ENCODE measurements at regions of chr20 and their contacts with region 1.

Region 1: DNA sequence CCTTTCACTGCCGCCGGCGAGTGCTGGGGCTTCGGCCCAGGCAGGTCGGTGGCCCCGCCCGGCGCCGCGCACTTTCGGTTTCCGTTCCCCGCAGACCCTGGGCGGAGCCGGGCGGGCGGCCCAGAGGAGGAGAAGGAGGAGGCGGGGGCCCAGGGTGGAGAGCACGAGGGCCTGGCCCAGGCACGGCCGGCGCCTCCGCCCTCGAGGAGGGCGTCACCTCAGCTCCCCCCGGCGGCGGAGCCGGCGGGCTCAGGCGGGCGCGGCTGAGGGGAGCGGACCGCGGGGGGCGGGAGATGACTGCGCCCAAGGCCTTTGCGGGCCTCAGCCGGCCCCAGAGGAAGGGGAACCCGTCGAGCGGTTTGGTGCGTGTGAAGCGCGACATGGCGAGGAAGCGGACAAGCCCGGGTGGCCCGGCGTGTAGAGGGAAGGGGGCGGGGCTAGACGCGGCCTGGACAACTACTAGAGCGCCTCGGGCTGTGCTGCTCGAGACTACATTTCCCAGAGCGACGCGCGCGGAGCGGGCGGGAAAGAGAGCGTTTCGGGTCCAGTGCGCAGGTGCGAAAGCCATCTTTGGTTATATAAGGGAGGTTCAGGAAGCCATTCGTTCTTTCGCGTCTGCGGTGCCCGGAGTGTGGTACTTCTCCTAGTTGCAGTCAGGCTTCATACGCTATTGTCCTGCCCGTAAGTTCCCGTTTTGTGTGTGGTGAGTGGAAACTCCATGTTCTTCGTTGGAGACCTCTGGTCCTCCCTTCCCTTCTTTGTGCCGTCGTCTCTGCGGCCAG is at the start of gene ZNFX1:
- DNase-seq: peak; percentile 99
- H3K4me3 Mint-ChIP-seq: peak within 1 kb of the TSS; percentile 99
- H3K27ac Mint-ChIP-seq: peak within 1 kb of the TSS; percentile 99
- H3K4me1 Mint-ChIP-seq: peaks cover 52% of the 10 kb centered on the region
- H3K27me3 Mint-ChIP-seq: no peaks in the 10 kb centered on the region
- total RNA-seq, gene ZNFX1: 61.2 and 61.5 TPM in 2 replicates

Region 2: DNA sequence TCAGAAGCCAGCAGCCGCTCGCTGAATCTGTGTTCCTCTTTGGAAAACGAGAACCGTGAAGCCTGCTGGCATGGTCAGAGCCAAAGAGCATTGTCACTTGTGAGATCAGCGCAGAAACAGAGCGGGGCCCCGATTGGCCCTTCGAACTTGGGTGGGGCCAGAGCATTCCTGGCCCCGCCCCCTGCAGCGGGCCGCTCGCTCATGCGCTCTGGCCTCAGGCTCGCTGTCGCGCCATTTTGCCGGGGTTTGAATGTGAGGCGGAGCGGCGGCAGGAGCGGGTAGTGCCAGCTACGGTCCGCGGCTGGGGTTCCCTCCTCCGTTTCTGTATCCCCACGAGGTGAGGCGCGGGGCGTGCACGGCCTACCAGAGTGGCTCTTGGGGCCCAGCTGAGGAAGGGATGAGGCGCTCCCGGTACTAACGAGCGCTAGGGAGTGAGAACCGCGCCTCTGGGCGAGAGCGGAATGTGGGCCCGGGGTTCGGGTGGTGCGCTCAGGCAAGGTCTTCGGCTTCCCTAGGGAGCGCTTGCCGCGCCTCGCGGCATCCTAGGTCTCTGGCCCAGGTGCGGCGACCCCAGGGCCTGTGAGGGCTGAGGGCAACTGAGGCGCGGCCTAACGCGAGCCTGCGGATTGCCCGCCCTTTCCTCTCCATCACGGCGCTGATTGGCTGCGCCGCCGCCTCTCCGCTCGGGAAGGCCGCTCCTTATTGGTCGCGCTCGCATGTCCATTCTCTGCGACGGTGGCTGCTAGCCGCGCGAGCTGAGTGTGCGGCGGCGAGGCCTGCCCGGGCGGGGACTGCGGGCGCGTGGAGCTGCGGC is 231.9 kb before region 1 on chr20 and contains the start of gene CSE1L:
- intact Hi-C with region 1: loop called (anchors 1 kb)
- DNase-seq: peak; percentile 99
- H3K4me3 Mint-ChIP-seq: peak within 1 kb of the TSS; percentile 99
- H3K27ac Mint-ChIP-seq: peak within 1 kb of the TSS; percentile 100
- H3K4me1 Mint-ChIP-seq: peaks cover 28% of the 10 kb centered on the region
- H3K27me3 Mint-ChIP-seq: no peaks in the 10 kb centered on the region
- total RNA-seq, gene CSE1L: 135 and 136 TPM in 2 replicates

Region 3: DNA sequence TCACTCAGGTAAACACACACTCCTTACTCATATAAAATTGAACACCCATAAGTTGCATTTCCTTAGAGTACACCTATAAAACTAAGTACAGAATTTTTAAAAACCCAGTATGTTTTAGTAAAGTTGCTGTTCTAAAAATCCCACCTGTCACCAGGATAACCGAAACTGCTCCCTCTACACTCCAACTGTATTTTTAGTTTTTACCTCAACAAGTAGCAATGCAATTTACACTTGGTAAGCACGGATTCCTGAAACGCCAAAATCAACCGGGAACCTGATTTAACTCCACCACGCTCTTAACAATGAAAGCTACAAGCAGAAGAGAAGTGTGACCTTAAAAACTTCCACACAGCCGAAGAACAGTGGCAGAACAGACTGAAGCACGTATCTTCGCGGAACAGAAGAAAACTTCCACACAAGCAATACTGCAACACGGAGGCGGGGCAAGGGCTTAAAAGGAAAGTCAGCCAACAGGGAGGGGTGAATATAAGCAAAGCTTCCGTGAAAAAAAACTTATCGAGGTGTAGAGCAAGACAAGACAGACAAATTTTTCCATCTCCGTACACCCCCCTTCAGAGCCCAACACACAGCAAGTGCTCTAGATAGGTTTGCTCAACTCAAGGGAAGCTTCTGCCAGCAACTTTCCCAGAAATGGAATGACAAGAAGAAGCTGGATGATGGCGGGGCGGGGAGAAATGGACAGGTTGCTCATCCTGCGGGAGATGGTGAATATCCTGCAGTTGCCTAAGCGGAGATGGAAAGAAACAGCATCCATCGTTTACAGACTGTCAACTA is 91.5 kb before region 1 on chr20:
- intact Hi-C with region 1: loop called (anchors 1 kb)
- DNase-seq: peak; percentile 91
- H3K4me3 Mint-ChIP-seq: peak overlapping the region; percentile 95
- H3K27ac Mint-ChIP-seq: peak overlapping the region; percentile 84
- H3K4me1 Mint-ChIP-seq: peaks cover 46% of the 10 kb centered on the region
- H3K27me3 Mint-ChIP-seq: peaks cover 3% of the 10 kb centered on the region

Region 4: GRCh38 chr20:49310705-49311104 is 32.5 kb after region 1 on chr20:
- intact Hi-C with region 1: loop called (anchors 1 kb)
- DNase-seq: no peak
- H3K4me3 Mint-ChIP-seq: peak overlapping the region; percentile 1
- H3K27ac Mint-ChIP-seq: peak overlapping the region; percentile 80
- H3K4me1 Mint-ChIP-seq: peaks cover 23% of the 10 kb centered on the region
- H3K27me3 Mint-ChIP-seq: peaks cover 22% of the 10 kb centered on the region

Region 5: GRCh38 chr20:49594143-49594930 is 316.1 kb after region 1 on chr20:
- intact Hi-C with region 1: loop called (anchors 1 kb)
- DNase-seq: peak; percentile 93
- H3K4me3 Mint-ChIP-seq: peak overlapping the region; percentile 90
- H3K27ac Mint-ChIP-seq: peak overlapping the region; percentile 100
- H3K4me1 Mint-ChIP-seq: peaks cover 79% of the 10 kb centered on the region
- H3K27me3 Mint-ChIP-seq: no peaks in the 10 kb centered on the region

Region 6: DNA sequence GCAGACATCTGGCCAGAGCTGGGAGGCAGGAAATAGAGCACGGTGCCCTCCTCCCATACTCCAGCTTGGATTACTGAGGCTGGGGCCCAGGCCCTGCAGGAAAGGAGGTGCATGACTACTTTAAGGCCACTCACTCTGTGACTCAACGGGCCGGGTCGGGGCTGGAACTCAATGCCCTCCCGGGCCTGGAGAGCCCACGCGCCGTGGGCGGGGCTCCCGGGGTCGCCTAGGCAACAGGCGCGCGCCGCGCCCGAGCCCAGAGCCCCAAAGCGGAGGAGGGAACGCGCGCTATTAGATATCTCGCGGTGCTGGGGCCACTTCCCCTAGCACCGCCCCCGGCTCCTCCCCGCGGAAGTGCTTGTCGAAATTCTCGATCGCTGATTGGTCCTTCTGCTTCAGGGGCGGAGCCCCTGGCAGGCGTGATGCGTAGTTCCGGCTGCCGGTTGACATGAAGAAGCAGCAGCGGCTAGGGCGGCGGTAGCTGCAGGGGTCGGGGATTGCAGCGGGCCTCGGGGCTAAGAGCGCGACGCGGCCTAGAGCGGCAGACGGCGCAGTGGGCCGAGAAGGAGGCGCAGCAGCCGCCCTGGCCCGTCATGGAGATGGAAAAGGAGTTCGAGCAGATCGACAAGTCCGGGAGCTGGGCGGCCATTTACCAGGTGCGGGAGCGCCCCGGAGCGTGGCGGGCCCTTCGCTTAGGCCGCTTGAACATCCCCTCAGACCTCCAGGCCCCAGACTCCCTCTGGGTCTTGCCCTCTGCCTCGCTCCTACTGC is 1231.9 kb after region 1 on chr20 and contains the start of gene PTPN1:
- intact Hi-C with region 1: loop called (anchors 2 kb)
- DNase-seq: peak; percentile 100
- H3K4me3 Mint-ChIP-seq: peak within 1 kb of the TSS; percentile 98
- H3K27ac Mint-ChIP-seq: peak within 1 kb of the TSS; percentile 93
- H3K4me1 Mint-ChIP-seq: peaks cover 44% of the 10 kb centered on the region
- H3K27me3 Mint-ChIP-seq: no peaks in the 10 kb centered on the region
- total RNA-seq, gene PTPN1: 61.4 and 62.9 TPM in 2 replicates